ENCODE measurements at regions of chr7 and their contacts with region 1.

Region 1: DNA sequence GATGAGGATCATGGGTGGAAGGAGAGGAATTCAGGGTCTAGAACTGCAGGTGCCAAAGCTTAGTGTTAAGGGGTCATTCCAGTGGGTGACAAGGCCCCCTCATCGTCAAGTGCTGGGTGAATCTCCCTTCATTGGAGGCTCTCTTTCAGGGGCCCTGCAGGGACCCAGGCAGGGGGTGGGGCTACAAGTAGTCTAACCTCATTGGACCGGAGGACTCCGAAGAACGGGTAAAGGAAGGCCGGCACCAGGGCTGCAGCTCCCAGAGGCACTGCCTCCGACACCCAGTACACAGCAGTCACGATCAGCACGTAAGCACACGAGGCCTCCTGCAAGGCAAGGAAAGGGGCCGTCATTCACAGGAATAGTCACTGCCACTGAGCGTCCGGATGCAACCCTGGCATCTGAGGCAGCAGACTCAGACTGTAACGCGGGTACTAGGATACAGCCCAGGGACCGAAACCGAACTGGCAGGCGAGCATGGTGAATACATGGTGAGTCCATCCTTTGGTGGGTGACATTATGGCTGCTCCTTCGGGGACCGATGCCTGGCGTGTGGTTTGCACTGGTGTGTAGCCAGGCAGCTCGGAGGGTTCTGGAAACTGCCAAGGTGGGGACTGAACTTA is 6.7 kb downstream of the SLC13A4 start:
- DNase-seq: no peak
- H3K4me3 ChIP-seq: no peak overlapping the region
- CTCF ChIP-seq: no peak
- POLR2A ChIP-seq: no peak

Region 2: GRCh38 chr7:134737566-134738345 is 983.6 kb before region 1 on chr7:
- intact Hi-C with region 1: no loop called
- DNase-seq: no peak
- H3K4me3 ChIP-seq: no peak overlapping the region
- CTCF ChIP-seq: no peak
- POLR2A ChIP-seq: no peak

Region 3: DNA sequence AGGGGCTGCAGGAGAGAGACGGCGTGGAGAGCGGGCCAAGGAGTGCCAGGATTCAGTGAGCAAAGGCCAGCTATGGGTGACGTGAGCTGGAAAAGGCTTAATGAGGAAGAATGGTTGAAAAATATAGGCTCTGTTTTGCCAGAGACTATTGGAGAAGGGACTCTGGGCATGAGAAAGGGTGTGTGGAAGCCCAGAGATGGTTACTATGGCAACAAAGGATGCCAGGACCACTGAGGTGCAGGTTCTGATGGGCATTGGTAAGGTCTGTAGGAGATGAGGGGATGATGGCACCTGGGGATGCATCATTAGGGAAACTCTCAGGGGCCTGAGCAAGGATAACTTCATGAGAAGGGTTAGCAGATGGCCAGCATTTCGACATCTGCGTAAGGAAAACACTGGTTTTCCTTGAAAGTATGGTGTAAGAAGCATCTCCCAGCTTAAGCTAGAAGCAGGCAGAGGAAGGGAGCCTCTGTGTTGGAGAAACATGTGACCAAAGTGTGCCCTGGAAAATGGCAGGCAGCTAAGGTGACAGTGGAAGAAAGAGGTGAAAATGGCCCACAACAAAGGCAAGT is 48.9 kb after region 1 on chr7:
- intact Hi-C with region 1: loop called (anchors 1 kb)
- DNase-seq: no peak
- H3K4me3 ChIP-seq: no peak overlapping the region
- CTCF ChIP-seq: no peak
- POLR2A ChIP-seq: no peak

Measured in lower leg skin (tissue), 4 donors.